ENCODE measurements at regions of chr3 and their contacts with region 1.

Region 1: DNA sequence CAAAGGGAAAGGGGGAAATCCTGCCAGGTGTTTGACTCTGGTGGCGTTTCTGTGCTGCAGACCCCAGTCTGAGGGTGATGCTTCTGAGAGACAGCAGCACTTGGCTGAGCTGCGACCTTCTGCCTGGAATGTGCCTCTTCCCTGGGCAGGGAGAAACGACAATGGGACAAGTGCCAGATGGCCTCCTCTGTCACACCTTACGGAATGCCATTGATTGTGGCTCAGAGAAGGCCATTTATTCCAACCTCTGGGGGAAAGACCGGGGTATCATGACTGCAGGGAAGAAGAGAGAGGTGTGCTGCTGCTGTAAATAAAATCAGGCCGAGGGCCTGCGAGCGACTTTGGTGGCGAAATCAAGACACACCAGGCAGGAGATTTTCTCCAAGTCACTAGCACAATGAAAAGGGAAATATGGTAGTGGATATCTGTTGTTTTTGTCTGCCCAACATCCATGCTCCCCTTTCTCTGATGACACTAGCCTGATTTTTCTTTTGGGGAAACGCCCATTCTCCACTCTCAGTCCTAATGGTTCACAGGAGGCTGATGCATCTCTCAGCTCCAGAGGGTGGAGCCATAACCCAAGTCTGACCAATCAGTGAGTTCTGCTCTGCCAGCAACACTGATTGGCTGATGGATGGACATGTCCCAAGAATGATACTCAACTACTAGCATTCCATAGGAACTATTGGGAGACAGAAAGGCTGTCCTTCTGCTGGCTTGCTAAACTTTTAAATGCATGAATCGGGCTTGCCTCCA is 336.1 kb downstream of the FOXP1 start:
- DNase-seq: peak; percentile 58
- H3K4me3 Mint-ChIP-seq: peak overlapping the region; percentile 56
- H3K27ac Mint-ChIP-seq: peak overlapping the region; percentile 89
- H3K4me1 Mint-ChIP-seq: peaks cover 55% of the 10 kb centered on the region
- H3K27me3 Mint-ChIP-seq: no peaks in the 10 kb centered on the region
- CTCF ChIP-seq: no peak

Region 2: DNA sequence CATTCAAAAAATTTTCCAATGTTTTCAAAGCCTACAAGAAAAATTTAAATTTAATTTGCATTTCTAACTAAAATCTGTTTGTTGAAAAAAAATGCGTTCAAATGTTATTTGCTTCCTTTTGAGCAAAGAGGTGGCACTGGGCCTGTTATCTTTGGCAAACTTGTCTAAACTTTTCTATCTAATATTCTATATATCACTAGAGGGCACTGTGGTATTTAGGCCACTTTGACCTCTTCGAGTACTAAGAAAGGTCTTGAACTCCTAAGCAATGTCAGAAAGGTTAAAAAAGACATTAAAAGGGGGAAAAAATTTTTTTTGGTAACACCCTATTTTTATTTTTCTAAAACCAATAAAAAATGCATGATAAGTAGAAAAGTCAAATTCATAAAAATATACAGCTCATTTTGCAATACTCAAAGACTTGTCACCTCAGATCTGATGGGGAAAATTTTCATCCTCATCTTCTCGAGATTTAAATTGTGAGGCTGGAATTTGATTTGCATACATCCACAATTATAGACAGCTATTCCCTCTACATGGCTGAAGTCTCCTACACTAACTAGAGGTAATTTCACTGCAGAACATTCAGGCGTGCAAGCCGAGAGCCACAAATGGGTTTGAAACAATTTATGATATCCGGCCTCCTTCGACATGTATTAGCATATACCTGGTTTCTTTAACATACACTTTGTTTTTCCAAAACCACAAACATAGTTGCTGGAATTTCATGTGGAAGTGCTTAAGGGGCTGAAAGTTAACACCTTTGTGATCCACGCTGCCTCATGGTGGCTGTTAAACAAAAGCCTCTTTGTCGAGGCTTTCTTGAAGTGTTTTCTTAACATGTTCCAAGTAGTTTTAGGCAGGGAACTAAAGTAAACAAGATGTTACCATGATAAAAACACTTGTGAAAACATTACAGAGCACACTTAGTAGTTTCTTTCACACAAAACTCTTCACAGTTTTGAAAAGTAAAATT is 240.3 kb before region 1 on chr3:
- CTCF ChIA-PET with region 1: no interaction called
- intact Hi-C with region 1: loop called (anchors 5 kb)
- DNase-seq: peak; percentile 29
- H3K4me3 Mint-ChIP-seq: no peak overlapping the region
- H3K27ac Mint-ChIP-seq: peak overlapping the region; percentile 87
- H3K4me1 Mint-ChIP-seq: peaks cover 23% of the 10 kb centered on the region
- H3K27me3 Mint-ChIP-seq: no peaks in the 10 kb centered on the region
- CTCF ChIP-seq: no peak

Region 3: DNA sequence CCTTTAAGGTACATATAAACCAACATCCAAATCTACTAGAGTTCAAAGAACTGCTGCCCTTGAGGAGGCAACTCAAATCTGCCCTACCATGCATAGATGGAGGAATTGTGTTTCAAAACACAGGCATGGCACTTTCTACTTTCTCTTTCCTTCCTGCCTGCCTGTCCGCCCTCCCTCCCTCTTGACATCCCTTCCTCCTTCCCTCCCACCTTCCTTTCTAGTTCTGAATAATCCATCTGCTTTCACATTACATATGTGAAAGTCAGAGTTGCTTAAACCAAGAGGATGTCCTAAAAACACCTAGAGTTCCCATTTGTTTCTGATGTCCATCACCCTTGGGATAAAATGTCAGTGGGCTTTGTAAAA is 201.5 kb before region 1 on chr3:
- CTCF ChIA-PET with region 1: no interaction called
- intact Hi-C with region 1: no loop called
- DNase-seq: no peak
- H3K4me3 Mint-ChIP-seq: no peak overlapping the region
- H3K27ac Mint-ChIP-seq: no peak overlapping the region
- H3K4me1 Mint-ChIP-seq: peaks cover 22% of the 10 kb centered on the region
- H3K27me3 Mint-ChIP-seq: no peaks in the 10 kb centered on the region
- CTCF ChIP-seq: no peak